Dorsolateral prefrontal cortex (tissue), 120 donors: ENCODE measurements at regions of chr19 and their contacts with region 1.

Region 1: DNA sequence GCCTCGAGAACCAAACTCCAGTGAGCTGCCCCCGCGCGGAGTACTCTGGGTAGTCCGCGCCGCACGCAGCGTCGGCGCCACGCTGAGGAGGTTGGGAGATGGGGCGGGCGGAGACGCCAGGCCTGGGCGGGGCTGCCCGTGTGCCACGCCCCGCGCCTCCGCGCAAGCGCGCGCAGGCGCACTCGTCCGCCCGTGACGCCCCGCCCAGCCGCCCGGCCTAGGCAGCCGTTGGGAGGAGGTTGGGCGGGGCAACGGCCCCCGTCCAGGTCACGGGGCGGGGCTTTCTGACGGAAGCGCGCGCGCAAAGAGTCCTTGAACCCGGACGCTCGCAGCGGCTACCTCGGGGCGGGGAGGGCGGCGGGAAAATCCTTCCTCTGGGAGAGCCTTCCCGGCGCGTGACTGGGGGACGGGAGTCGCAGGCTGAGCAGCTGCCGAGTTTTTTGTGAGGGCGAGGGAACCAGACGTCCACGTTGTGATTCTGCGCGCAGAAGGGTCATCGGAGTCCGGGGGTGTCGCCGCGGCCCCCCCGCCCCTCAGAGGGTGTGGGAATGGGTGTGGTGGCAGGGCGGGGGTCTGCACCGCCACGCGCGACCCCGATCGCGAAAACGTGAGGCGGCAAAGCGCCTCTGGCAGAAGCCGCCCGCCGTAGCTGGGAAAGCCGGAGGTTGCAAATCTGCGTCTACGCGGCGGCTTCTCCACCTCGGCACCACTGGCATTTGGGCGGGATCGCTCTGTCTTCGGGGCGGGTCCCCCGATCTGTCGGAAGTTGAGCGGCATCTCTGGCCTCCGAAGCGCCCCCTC is at the start of gene MED26:
- DNase-seq: peak; percentile 92 to 97 (median 95)
- H3K4me3 ChIP-seq: peak within 1 kb of the TSS; percentile 73 to 100 (median 96)
- H3K27ac ChIP-seq: peak within 1 kb of the TSS in 57 of 59 donors; percentile 51 to 98 (median 89)
- H3K27me3 ChIP-seq: no peaks in the 10 kb centered on the region
- CTCF ChIP-seq: peak in 42 of 56 donors; percentile 2 to 60 (median 37)
- total RNA-seq, gene MED26: 5.4 to 17.4 (median 9.8) TPM

Region 2: DNA sequence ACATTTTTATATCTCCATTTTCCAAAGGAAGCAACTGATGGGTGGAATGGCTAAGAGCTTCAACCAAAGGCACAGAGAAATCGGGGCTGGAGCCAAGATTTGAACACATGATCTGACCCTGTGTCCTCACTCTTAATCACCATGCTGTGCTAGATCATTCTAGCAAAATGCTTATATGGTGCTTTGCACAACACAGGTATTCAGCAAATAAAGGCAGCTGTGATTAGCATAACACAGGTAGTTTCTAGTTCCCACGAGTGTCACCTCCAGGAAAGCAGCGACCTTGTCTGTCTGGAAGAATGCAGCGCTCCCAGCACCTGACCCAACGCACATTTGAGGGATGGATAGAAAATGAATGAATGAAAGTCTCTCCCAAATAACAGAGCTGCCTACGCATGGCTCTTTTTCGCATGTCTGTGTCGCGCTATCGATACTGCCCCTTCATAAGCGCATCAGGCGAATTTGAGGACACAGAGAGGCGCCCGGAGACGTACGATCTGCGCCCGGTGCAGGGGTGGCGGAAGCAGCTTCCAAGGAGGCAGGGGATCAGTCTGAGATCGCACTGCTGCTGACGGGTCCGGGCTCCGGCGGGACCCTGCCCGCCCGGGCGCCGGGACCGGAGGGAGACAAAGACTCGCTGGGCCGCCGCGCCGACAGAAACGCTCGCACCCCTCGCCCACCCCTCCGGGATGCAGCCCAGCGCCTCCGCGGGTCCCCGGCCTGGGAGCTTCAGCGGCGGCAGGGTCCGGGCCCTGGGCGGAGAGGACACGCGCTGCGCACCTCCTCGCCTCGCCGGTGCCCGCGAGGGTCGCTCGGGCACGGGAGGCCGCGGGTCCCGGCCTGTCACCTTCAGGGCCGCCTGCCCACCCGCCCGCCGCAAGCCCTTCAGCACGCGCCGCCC is 157.2 kb before region 1 on chr19:
- intact Hi-C with region 1: loop called in 1 of 2 experiments (anchors 5 kb)
- DNase-seq: peak in 4 of 10 donors; percentile 16 to 50 (median 20)
- H3K4me3 ChIP-seq: peak overlapping the region; percentile 51 to 98 (median 91)
- H3K27ac ChIP-seq: peak overlapping the region in 53 of 59 donors; percentile 8 to 93 (median 79)
- H3K27me3 ChIP-seq: no peaks in the 10 kb centered on the region
- CTCF ChIP-seq: no peak

Region 3: DNA sequence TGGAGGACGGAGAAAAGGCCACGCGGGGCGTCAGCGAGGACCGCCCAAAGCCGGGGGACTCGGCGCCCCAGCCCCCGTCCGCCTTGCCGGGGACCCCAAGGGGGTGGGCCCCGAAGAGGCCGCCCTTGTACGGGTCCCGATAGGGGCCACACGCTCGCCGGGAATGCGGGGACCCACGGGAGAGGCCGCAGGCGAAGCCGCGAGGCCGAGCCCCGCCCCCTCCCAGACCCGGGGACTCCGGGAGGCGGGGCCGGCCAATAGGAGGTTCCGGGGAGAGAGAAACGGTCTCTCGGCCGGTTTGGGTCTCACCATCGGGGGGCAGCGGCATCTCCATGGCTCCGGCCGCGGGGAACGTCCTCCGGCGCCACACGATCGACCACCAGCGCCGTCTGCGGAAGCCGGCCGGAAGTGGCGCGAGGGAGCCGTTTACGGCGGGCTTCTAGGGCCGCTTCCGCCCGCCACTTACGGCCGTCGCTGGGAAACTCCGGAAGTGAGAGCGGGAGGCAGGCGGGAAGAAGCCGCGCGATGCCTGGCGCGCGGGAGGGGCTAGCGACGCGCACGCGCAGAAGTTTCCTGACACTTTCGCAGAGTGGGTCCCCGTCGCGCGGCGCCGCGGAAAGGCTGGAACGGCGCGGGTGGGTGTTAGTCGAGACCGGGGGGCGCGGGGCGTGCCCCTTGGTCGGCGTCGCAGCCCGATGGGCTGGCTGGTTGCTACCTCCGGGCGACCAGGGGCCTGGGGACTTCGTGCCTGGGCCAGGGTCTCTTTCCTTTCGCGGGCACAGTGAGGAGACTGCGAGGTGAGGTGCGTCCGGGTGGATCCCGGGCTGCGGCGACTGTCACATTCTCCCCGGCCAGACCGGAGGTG is 86.1 kb before region 1 on chr19 and contains the start of gene CHERP:
- intact Hi-C with region 1: loop called (anchors 1 kb)
- DNase-seq: peak; percentile 86 to 95 (median 92)
- H3K4me3 ChIP-seq: peak within 1 kb of the TSS; percentile 66 to 100 (median 94)
- H3K27ac ChIP-seq: peak within 1 kb of the TSS; percentile 20 to 97 (median 87)
- H3K27me3 ChIP-seq: no peaks in the 10 kb centered on the region
- CTCF ChIP-seq: peak in 37 of 56 donors; percentile 7 to 66 (median 32)
- total RNA-seq, gene CHERP: 35.1 to 67.0 (median 47.9) TPM

Region 4: DNA sequence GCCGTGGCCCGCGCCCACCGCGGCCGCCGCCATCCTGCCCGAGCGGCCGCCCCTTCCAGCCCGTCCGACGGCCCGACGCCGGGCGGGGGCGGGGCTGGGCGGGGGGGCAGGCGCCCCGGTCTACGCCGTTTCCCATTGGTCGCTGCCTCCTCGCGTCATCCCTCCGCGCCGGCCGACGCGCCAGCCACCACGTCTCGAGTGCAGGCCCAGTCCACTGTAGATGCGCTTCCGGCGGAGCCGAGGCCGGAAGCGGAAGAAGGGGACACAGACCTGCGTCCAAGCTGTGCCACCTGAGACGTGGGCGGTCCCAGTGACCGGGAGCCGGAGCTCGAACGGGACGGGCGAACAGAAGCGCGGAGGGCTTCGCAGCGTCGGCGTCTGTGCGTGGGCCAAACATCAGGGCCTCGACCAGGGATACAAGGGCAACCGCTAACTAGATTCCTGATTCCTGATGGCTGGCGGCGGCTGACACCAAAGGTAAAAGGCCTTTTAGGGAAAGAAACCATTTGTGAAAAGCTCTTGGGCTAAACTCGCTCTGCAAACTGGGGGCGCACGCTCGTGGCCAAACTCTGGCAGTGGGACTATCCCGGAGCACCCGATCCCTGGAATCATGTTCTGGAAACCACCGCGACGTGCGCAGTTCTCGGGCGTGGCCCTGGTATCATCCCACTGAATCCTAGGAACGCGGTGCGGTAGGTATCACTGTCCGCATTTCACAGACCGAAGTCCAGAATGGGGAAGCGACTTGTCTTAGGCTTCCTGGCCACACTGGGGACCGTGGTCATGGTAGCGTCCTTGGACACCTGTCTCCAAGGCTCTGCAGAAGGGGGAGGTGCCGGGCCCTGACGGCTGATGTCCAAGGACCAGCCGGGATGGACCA is 55.8 kb before region 1 on chr19 and contains the start of gene SLC35E1:
- intact Hi-C with region 1: loop called (anchors 1 kb)
- DNase-seq: peak; percentile 89 to 96 (median 94)
- H3K4me3 ChIP-seq: peak within 1 kb of the TSS; percentile 68 to 99 (median 90)
- H3K27ac ChIP-seq: peak within 1 kb of the TSS in 58 of 59 donors; percentile 1 to 92 (median 77)
- H3K27me3 ChIP-seq: no peaks in the 10 kb centered on the region
- CTCF ChIP-seq: peak in 17 of 56 donors; percentile 6 to 37 (median 23)
- total RNA-seq, gene SLC35E1: 27.5 to 64.1 (median 42.2) TPM

Region 5: GRCh38 chr19:16659831-16660708 is 31.7 kb after region 1 on chr19 and contains the start of gene SMIM7:
- intact Hi-C with region 1: loop called (anchors 2 to 5 kb)
- DNase-seq: peak; percentile 95 to 99 (median 98)
- H3K4me3 ChIP-seq: peak within 1 kb of the TSS; percentile 65 to 97 (median 87)
- H3K27ac ChIP-seq: peak within 1 kb of the TSS; percentile 80 to 100 (median 95)
- H3K27me3 ChIP-seq: no peaks in the 10 kb centered on the region
- CTCF ChIP-seq: peak in 55 of 56 donors; percentile 9 to 75 (median 60)
- total RNA-seq, gene SMIM7: 55.9 to 95.0 (median 72.6) TPM

Region 6: GRCh38 chr19:17358395-17358794 is 730.0 kb after region 1 on chr19:
- intact Hi-C with region 1: no loop called
- DNase-seq: no peak
- H3K4me3 ChIP-seq: no peak overlapping the region
- H3K27ac ChIP-seq: peak overlapping the region in 3 of 59 donors; percentile 8 to 57 (median 16)
- H3K27me3 ChIP-seq: no peaks in the 10 kb centered on the region
- CTCF ChIP-seq: no peak